HEK293 (cell line): ENCODE measurements at regions of chr22 and their contacts with region 1.

Region 1: DNA sequence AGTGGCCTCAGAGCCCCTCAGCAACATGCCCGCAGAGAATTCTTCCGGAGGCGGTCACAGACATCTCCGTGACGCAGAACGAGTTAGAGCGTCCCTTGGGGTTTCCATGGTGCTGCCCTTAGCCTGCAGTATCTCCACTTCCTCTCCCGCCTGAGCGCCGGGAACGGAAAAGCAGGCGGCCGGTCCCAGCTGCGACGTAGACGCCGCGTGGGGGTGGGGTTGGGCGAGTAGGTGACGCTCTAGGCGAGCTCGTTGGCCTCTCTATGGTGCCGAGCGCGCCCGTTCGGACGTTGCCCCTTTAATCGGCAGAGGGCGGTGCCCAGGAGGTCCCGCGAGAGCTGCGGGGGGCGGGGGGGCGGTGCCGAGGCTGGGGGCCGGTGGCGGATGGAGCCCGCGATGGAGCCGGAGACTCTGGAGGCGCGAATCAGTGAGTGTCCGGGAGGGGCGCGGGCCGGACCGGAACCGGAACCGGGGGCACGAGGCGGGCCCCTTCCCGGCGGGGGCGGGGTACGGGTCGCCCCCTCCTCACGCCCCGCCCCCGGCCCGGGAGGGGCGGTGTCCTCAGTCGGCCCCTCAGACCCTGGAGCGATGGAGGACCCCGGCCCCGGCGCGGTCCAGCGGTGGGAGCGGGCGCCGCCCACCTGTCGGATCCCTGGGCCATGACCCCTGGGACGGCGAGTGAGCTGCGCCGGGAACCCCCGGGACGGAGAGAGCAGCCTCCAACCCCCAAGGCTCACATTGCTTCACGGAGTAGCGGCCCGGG is at the start of gene GGA1:
- H3K4me3 ChIP-seq: peak within 1 kb of the TSS; percentile 96
- H3K27ac ChIP-seq: peak within 1 kb of the TSS; percentile 99
- H3K4me1 ChIP-seq: peaks cover 8% of the 10 kb centered on the region
- CTCF ChIP-seq: no peak; the same call in 1 of the 2 replicates

Region 2: GRCh38 chr22:37561212-37562048 is 47.2 kb before region 1 on chr22:
- CTCF ChIA-PET with region 1: interaction called, 33 read pairs
- POLR2A ChIA-PET with region 1: interaction called, 21 read pairs
- H3K4me3 ChIP-seq: peak overlapping the region; percentile 69
- H3K27ac ChIP-seq: peak overlapping the region; percentile 96
- H3K4me1 ChIP-seq: peaks cover 12% of the 10 kb centered on the region
- CTCF ChIP-seq: peak; percentile 94

Region 3: DNA sequence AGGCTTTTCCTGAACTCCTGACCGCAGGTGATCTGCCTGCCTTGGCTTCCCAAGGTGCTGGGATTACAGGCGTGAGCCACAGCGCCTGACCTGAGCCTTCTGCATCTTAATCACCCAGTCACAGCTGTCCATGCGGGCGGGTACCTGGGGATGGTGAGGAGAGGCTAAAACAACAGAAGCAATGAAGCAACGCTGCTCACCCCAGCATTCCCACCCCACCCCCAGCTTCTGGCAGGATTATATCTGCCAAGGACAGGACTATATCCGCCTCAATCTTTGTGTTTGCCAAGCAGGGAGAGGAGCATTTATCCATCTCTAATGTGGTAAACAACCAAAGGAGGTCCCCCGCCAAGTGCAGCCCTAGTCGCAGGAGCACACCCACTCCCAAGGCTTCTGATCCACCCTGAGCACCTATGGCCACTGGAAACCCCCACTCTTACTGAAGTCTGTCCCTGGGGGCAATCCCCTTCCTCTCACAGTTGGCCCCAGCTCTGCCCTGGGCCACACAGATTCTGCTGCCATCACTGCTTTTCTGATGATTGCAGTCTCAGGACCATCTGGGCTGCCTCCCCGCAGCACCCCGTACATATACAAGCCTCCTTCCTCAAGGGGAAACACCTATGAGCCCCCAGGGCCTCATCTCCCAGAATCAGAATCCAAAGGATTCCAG is 20.0 kb before region 1 on chr22:
- CTCF ChIA-PET with region 1: interaction called, 60 read pairs
- POLR2A ChIA-PET with region 1: interaction called, 35 read pairs
- H3K4me3 ChIP-seq: no peak overlapping the region
- H3K27ac ChIP-seq: no peak overlapping the region
- H3K4me1 ChIP-seq: no peaks in the 10 kb centered on the region; the same call in 1 of the 2 replicates
- CTCF ChIP-seq: no peak

Region 4: GRCh38 chr22:37633625-37634416 is 25.2 kb after region 1 on chr22:
- CTCF ChIA-PET with region 1: interaction called, 12 read pairs
- POLR2A ChIA-PET with region 1: interaction called, 19 read pairs
- H3K4me3 ChIP-seq: no peak overlapping the region
- H3K27ac ChIP-seq: peak overlapping the region; percentile 7; the same call in 1 of the 2 replicates
- H3K4me1 ChIP-seq: peaks cover 13% of the 10 kb centered on the region
- CTCF ChIP-seq: peak; percentile 61

Region 5: GRCh38 chr22:37676736-37677492 is 68.3 kb after region 1 on chr22:
- CTCF ChIA-PET with region 1: interaction called, 7 read pairs
- POLR2A ChIA-PET with region 1: interaction called, 13 read pairs
- H3K4me3 ChIP-seq: peak overlapping the region; percentile 39
- H3K27ac ChIP-seq: peak overlapping the region; percentile 62
- H3K4me1 ChIP-seq: peaks cover 9% of the 10 kb centered on the region
- CTCF ChIP-seq: no peak